Activated naive CD4-positive, alpha-beta T cell treated with anti-CD3 and anti-CD28 coated beads for 36 hours (primary cell): ENCODE measurements at regions of chr6 and their contacts with region 1.

Region 1: DNA sequence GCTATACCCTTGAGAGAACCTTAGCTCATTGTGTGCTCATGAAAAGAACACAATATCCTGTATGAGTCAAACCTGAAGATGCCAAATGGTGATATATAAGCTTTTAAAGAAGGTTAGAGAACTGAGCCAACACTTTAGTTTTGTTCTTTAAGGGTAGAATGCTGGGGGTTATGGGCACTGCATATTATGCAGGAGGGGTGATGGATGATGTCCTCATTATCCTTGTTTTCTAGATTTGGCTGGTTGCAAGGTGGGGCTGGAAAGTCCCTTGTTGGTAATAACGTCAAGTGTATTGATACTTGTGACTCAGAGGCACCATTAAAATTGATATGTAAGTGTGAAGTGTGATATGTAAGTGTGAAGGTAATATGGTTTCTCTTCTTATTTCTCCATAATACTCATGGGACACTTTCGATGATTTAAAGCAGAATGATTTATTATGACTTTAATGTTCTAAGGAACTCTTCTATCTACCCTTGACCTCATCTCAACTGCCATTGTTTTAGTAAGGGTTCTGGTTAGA is 113.7 kb upstream of the DTNBP1 start:
- DNase-seq: peak; percentile 69
- H3K4me3 Mint-ChIP-seq: no peak overlapping the region
- H3K27ac Mint-ChIP-seq: peak overlapping the region; percentile 76
- H3K4me1 Mint-ChIP-seq: peaks cover 40% of the 10 kb centered on the region
- H3K27me3 Mint-ChIP-seq: peaks cover 4% of the 10 kb centered on the region

Region 2: DNA sequence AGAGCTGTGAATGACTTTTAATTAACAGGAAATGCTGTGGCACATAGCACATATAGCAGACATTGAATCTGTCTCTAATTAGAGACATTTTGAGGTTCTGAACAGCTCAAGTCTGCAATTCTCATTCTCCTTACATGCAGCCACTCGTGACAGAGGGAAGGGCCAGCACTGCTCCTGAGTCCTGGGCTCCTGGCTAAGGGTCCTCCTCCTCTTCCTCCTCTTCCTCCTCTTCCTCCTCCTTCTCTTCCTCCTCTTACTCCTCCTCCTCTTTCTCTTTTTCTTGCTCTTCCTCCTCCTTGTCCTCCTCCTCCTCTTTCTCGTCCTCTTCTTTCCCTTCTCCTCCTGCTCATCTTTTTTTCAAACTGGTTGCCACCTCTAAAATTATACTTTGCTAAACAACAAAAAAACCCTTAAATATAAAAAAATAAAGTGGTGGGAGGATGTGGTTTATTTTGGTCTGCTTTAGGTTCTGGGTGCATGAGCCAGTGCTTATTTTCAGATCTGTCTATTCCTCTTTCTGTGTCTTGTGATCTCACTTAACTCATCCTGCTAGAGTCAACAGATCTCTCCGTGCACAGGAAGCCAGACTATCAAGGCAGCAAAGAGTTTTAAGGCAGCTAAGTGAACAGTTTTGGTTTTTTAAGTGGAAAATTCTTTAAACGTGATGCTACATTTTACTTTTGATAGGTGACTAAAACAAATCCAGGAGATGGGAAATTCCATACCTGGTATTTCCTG is 1499.7 kb before region 1 on chr6:
- CTCF ChIA-PET with region 1: no interaction called
- intact Hi-C with region 1: loop called (anchors 5 kb)
- DNase-seq: peak; percentile 63
- H3K4me3 Mint-ChIP-seq: peak overlapping the region; percentile 40
- H3K27ac Mint-ChIP-seq: peak overlapping the region; percentile 85
- H3K4me1 Mint-ChIP-seq: peaks cover 37% of the 10 kb centered on the region
- H3K27me3 Mint-ChIP-seq: no peaks in the 10 kb centered on the region

Region 3: DNA sequence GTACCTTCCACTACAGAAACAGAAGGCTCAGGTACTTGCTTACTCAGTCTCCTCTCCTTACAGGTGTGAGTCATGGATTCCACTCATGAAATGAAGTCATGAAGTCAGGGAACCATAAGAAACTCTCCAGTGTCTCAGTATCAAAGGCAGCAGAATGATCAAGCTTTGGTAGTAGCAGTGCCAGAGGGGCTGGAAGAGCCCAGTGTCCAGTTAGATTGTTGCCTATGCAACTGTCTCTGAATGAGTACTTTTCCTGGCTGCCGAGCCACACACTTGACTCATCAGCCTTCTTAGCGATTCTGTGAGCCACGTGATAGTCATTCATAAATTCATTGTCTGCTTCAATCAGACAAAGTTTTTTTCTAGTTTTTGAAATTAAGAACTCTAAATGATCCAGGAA is 61.5 kb before region 1 on chr6:
- CTCF ChIA-PET with region 1: interaction called, 4 read pairs
- intact Hi-C with region 1: loop called (anchors 1 kb)
- DNase-seq: peak; percentile 68
- H3K4me3 Mint-ChIP-seq: no peak overlapping the region
- H3K27ac Mint-ChIP-seq: peak overlapping the region; percentile 39
- H3K4me1 Mint-ChIP-seq: peaks cover 22% of the 10 kb centered on the region
- H3K27me3 Mint-ChIP-seq: peaks cover 2% of the 10 kb centered on the region

Region 4: GRCh38 chr6:15841937-15842705 is 65.6 kb after region 1 on chr6:
- CTCF ChIA-PET with region 1: no interaction called
- intact Hi-C with region 1: no loop called
- DNase-seq: no peak
- H3K4me3 Mint-ChIP-seq: no peak overlapping the region
- H3K27ac Mint-ChIP-seq: no peak overlapping the region
- H3K4me1 Mint-ChIP-seq: no peaks in the 10 kb centered on the region
- H3K27me3 Mint-ChIP-seq: peaks cover 4% of the 10 kb centered on the region

Region 5: DNA sequence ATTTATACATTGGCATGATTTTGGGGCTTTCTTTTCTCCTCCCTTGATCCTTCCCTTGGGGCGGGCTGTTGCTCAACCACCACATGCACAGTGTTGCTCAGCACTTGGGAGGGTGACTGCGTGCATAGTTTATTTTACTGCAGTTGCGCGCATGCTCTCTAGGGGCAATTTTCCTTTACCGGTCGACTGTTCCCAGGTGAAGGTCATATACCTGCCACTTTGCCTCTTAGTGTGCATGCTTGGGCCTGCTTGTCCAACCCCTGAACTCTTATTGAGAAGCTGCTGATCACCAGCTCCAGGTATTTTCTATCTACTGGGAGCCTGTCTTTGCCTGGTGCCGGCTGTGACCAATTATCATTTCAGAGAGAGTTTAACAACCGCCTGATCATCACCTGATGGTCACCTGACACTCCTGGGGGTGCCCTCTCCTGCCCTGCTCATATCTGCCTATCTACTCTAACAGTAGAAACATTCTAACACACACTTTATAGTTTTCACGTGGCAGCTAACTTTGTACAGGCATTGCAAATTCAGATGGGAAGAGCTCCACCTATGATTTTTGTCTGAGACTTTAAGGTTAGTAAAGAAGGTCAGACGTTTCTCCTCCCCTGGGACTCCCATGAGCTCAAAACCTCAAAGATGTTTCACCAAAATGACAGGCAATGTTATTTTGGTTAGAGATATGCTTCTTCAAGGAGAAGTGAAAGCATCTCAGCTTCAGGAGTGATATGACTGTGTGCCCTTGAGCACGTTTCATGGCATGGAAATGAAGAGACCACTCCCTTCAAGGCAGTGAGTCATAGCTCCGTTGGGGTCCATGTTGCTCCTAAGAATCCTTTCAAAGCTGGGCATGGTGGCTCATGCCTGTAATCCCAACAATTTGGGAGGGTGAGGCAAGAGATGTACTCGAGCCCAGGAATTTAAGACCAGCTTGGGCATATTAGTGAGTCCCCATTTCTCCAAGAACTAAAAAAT is 124.9 kb after region 1 on chr6:
- CTCF ChIA-PET with region 1: interaction called, 4 read pairs
- intact Hi-C with region 1: loop called (anchors 1 kb)
- DNase-seq: peak; percentile 34
- H3K4me3 Mint-ChIP-seq: no peak overlapping the region
- H3K27ac Mint-ChIP-seq: peak overlapping the region; percentile 28
- H3K4me1 Mint-ChIP-seq: peaks cover 14% of the 10 kb centered on the region
- H3K27me3 Mint-ChIP-seq: peaks cover 2% of the 10 kb centered on the region

Region 6: DNA sequence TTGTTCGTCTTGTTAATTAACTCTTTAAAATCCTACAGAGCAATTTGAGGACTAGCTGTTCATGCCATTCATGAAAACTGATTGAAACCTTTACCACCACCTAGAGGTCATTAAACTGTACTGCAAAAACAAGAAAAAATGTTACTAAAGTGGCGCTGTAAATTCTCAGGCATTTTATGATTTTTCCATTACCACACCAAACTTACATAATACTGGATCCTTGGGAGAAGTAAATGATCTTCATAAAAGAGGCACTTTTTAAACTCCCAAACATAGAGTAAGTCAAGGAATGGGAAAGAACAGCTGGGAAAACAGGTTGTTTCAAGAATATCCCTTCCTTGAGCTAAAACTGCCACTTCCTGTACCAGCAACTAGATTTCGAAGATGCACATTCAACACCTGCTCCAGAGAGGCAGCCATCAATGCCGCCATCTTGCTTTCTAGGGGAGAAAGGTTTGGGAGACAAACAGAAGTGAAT is 406.7 kb after region 1 on chr6:
- CTCF ChIA-PET with region 1: interaction called, 6 read pairs
- intact Hi-C with region 1: loop called (anchors 2 kb)
- DNase-seq: no peak
- H3K4me3 Mint-ChIP-seq: no peak overlapping the region
- H3K27ac Mint-ChIP-seq: no peak overlapping the region
- H3K4me1 Mint-ChIP-seq: peaks cover 20% of the 10 kb centered on the region
- H3K27me3 Mint-ChIP-seq: no peaks in the 10 kb centered on the region

Region 7: GRCh38 chr6:17015144-17015543 is 1238.6 kb after region 1 on chr6:
- CTCF ChIA-PET with region 1: no interaction called
- intact Hi-C with region 1: loop called (anchors 1 kb)
- DNase-seq: peak; percentile 56
- H3K4me3 Mint-ChIP-seq: peak overlapping the region; percentile 41
- H3K27ac Mint-ChIP-seq: no peak overlapping the region
- H3K4me1 Mint-ChIP-seq: peaks cover 18% of the 10 kb centered on the region
- H3K27me3 Mint-ChIP-seq: peaks cover 27% of the 10 kb centered on the region